Activated T-helper 1 cell treated with anti-CD3 and anti-CD28 coated beads, Interleukin-12 subunit alpha, Interleukin-12 subunit beta, Interleukin-2, Interleukin-4 antibody, amounts not matched to agents 30 ng/mL and 10 ng/mL and 1 ng/mL, durations not matched to agents 14 hours and 24 hours and 36 hours (primary cell): ENCODE measurements at regions of chr7 and their contacts with region 1.

Region 1: DNA sequence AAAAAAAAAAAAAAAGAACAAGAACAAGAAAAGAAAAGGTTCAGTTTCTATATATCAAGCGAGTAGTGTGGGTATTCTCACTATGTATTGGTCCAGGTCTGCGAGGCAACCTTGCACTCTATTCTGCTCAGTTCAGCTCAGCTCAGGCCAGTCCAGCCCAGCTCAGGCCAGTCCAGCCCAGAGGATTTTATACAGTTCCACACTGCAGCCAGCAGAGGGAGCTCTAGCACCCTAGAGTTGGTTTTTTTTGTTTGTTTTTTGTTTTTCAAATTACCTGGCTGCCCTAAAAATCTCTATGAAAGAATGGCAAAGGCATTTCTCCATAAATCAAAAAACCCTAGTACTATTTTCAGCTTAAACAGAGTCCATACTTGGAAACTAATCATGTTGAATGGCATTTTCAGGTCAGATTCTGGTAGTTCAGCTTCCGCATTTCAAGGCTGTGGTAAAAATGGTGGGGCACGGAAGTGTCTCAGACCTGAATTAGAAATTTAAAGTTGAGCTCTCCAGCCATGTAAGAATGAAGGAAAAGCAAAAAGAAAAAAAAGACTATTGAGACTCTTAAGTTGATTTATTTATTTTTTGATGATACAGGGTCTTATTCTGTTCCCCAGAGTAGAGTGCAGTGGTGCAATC is 55.2 kb upstream of the GSDME start:
- DNase-seq: peak; percentile 30
- H3K4me3 Mint-ChIP-seq: no peak overlapping the region
- H3K27ac Mint-ChIP-seq: no peak overlapping the region
- H3K4me1 Mint-ChIP-seq: peaks cover 2% of the 10 kb centered on the region
- H3K27me3 Mint-ChIP-seq: no peaks in the 10 kb centered on the region

Region 2: GRCh38 chr7:25069900-25070443 is 257.5 kb after region 1 on chr7:
- intact Hi-C with region 1: loop called (anchors 1 kb)
- DNase-seq: peak; percentile 16
- H3K4me3 Mint-ChIP-seq: no peak overlapping the region
- H3K27ac Mint-ChIP-seq: no peak overlapping the region
- H3K4me1 Mint-ChIP-seq: peaks cover 27% of the 10 kb centered on the region
- H3K27me3 Mint-ChIP-seq: peaks cover 2% of the 10 kb centered on the region